Activated CD4-positive, alpha-beta memory T cell treated with anti-CD3 and anti-CD28 coated beads for 36 hours (primary cell): ENCODE measurements at regions of chr4 and their contacts with region 1.

Region 1: GRCh38 chr4:53132132-53132896 is 233.5 kb downstream of the SCFD2 start:
- DNase-seq: peak; percentile 26
- H3K4me3 Mint-ChIP-seq: no peak overlapping the region
- H3K27ac Mint-ChIP-seq: peak overlapping the region; percentile 38
- H3K4me1 Mint-ChIP-seq: peaks cover 27% of the 10 kb centered on the region
- H3K27me3 Mint-ChIP-seq: no peaks in the 10 kb centered on the region

Region 2: DNA sequence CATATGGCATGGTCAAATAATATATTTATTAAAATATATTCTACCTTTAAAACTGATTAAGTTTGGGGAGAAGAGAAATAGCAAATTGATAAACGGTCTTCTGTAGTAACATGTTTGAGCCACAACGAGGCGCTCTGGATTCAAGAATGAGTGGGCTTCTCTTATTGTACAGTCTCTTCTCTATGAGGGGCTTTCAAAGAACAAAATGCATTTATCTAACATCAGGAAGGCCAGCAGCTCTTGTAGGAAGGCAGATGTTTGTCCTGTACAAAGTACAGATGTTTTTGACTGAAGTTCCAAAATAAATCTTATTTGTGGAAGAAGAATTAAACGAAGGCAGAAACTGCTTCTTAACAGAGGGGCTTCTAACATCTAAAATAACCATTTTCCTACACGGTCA is 116.6 kb before region 1 on chr4:
- CTCF ChIA-PET with region 1: no interaction called
- POLR2A ChIA-PET with region 1: no interaction called
- intact Hi-C with region 1: loop called (anchors 10 kb)
- DNase-seq: peak; percentile 21
- H3K4me3 Mint-ChIP-seq: no peak overlapping the region
- H3K27ac Mint-ChIP-seq: no peak overlapping the region
- H3K4me1 Mint-ChIP-seq: peaks cover 22% of the 10 kb centered on the region
- H3K27me3 Mint-ChIP-seq: no peaks in the 10 kb centered on the region

Region 3: DNA sequence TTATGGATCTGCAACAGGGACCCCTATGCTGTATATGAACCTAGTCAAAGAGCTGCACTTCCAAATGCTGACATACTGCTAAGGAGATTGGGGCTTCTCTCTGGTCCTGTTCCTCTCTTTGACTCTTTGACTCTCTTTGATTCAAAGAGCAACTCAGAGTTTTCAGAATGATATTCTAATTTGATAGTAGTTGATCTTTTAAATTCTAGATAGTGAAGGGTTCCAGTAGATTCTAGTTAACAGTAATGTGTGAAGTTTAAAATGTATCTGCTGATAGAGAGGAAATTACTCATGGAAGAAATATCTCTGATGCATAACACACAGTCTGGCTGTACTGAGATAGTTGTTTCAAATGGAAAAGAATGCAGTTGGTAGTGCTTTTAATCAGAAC is 31.1 kb before region 1 on chr4:
- CTCF ChIA-PET with region 1: no interaction called
- POLR2A ChIA-PET with region 1: no interaction called
- intact Hi-C with region 1: loop called (anchors 1 kb)
- DNase-seq: no peak
- H3K4me3 Mint-ChIP-seq: no peak overlapping the region
- H3K27ac Mint-ChIP-seq: peak overlapping the region; percentile 9
- H3K4me1 Mint-ChIP-seq: peaks cover 12% of the 10 kb centered on the region
- H3K27me3 Mint-ChIP-seq: no peaks in the 10 kb centered on the region

Region 4: DNA sequence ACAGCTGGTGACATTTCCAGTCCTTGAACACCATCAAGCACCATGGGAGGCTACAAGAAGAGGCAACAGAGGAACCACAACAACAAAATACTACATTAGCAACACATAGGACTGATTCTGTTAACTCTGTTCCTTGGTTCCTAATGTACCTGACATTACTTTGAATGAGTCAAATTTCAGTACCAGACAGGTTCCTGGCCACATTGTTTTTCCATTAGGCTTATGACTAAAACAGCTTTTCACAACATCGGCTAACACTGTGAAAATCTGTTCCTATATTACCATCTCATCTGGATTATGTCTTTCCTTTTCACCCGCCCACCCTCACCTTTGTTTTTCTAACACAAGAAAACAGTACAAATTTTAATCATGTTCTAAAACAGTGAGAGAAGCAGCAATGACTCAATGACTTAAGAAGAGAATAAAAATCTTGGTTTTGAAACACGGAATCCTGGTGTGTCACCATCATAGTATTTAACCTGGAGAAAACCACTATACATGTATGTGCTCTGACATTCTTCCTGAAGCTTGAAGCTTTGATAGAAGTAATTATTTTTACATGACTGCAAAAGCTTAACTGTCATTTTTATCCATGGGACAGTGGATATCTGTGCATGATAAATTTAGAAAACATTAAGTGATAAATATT is 89.6 kb after region 1 on chr4:
- CTCF ChIA-PET with region 1: no interaction called
- POLR2A ChIA-PET with region 1: no interaction called
- intact Hi-C with region 1: loop called (anchors 1 kb)
- DNase-seq: no peak
- H3K4me3 Mint-ChIP-seq: no peak overlapping the region
- H3K27ac Mint-ChIP-seq: no peak overlapping the region
- H3K4me1 Mint-ChIP-seq: no peaks in the 10 kb centered on the region
- H3K27me3 Mint-ChIP-seq: no peaks in the 10 kb centered on the region

Region 5: GRCh38 chr4:53432528-53433424 is 300.5 kb after region 1 on chr4:
- CTCF ChIA-PET with region 1: no interaction called
- POLR2A ChIA-PET with region 1: no interaction called
- intact Hi-C with region 1: loop called (anchors 1 kb)
- DNase-seq: no peak
- H3K4me3 Mint-ChIP-seq: no peak overlapping the region
- H3K27ac Mint-ChIP-seq: no peak overlapping the region
- H3K4me1 Mint-ChIP-seq: peaks cover 23% of the 10 kb centered on the region
- H3K27me3 Mint-ChIP-seq: no peaks in the 10 kb centered on the region